Activated CD4-positive, alpha-beta memory T cell treated with anti-CD3 and anti-CD28 coated beads for 36 hours (primary cell): ENCODE measurements at regions of chr5 and their contacts with region 1.

Region 1: DNA sequence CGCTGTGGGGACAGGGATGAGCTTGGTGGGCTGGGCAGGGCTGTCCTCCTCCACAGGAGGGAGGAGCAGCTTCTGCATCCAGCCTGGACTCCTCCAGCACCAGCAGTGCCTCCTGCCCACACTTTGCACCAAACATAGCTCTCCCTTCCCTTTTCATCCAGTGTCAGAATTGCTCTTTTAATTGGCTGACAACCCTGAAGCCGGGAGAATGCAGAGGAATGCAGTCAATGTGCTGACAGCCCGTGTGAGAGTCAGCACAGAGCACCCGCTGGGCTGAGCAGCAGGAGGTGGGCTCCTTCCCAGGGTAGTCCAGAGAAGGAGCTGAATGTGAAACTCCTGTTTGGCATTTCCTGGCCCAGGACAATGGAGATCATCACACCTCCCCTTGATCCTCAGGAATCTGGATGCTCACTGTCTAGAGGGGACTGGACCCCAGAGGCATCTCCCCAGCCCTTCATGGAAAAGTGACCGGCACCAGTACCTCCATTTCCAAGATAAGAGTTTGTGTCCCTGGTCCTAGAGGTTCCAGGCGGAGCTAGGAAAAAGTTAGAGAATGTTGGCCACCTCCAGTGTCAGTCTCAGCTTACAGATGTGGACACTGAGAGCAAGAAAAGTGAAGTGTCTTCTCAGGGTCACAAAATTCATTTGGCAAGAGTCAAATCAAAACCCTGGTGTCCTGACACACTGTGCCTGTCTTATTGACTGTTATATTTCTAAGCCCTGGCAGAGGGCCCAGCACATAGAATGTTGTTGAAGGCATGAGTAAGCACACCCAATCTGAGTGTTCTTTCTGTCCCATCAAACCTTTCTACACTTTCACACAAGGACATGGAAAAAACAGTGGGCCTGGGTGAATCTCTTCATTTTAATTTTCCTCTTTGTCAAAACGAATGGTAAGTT is 202.1 kb downstream of the SNX18 start:
- DNase-seq: peak; percentile 67
- H3K4me3 Mint-ChIP-seq: no peak overlapping the region
- H3K27ac Mint-ChIP-seq: peak overlapping the region; percentile 42
- H3K4me1 Mint-ChIP-seq: peaks cover 34% of the 10 kb centered on the region
- H3K27me3 Mint-ChIP-seq: peaks cover under 1% of the 10 kb centered on the region

Region 2: DNA sequence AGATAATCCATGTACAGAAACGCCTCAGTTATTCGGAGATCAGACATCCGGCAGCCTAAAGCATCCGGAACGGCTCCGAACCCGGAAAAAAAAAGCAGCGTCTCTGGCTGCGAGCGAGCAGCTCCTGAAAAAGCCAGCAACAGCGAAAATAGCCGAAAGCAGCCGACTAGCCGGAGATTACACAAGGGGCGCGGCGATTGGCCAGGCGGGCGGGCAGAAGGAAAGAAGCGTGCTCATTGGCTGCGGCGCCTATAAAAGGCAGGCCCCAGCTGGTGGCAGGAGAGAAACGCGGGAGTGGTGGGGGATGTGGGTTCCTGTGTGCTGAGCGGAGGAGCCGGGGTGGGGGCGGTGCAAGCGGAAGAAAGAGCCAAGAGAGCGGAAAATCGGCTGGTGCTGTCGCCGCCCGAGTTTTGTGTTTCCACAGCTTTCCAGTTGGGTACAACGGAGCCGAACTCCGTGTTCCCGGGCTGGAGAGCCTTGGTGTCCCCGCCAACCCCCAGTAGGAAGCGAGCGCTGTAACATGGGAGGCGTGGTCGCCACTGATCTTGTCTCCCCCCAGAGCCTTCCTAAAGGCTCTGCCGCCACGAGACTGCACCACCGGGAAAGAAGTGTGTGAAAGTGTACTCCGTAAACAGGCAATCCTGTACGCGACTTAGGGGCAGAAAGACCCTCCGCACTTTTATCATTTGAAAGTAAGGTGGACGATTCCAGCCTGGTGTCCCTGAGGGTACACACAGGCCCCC is 409.0 kb before region 1 on chr5 and contains the start of gene ARL15:
- CTCF ChIA-PET with region 1: no interaction called
- POLR2A ChIA-PET with region 1: no interaction called
- intact Hi-C with region 1: loop called (anchors 5 kb)
- DNase-seq: peak; percentile 98
- H3K4me3 Mint-ChIP-seq: peak within 1 kb of the TSS; percentile 86
- H3K27ac Mint-ChIP-seq: peak within 1 kb of the TSS; percentile 89
- H3K4me1 Mint-ChIP-seq: peaks cover 25% of the 10 kb centered on the region
- H3K27me3 Mint-ChIP-seq: peaks cover 3% of the 10 kb centered on the region
- total RNA-seq, gene ARL15: 4.5 to 5.5 TPM

Region 3: GRCh38 chr5:54580997-54581811 is 138.4 kb before region 1 on chr5:
- CTCF ChIA-PET with region 1: no interaction called
- POLR2A ChIA-PET with region 1: no interaction called
- intact Hi-C with region 1: no loop called
- DNase-seq: no peak
- H3K4me3 Mint-ChIP-seq: no peak overlapping the region
- H3K27ac Mint-ChIP-seq: no peak overlapping the region
- H3K4me1 Mint-ChIP-seq: peaks cover 4% of the 10 kb centered on the region
- H3K27me3 Mint-ChIP-seq: no peaks in the 10 kb centered on the region

Region 4: GRCh38 chr5:54646356-54647101 is 73.1 kb before region 1 on chr5:
- CTCF ChIA-PET with region 1: interaction called, 4 read pairs
- POLR2A ChIA-PET with region 1: interaction called, 5 read pairs
- intact Hi-C with region 1: loop called (anchors 1 kb)
- DNase-seq: peak; percentile 85
- H3K4me3 Mint-ChIP-seq: peak overlapping the region; percentile 33
- H3K27ac Mint-ChIP-seq: peak overlapping the region; percentile 80
- H3K4me1 Mint-ChIP-seq: peaks cover 50% of the 10 kb centered on the region
- H3K27me3 Mint-ChIP-seq: no peaks in the 10 kb centered on the region

Region 5: GRCh38 chr5:54753034-54753433 is 33.4 kb after region 1 on chr5:
- CTCF ChIA-PET with region 1: no interaction called
- POLR2A ChIA-PET with region 1: no interaction called
- intact Hi-C with region 1: loop called (anchors 1 kb)
- DNase-seq: peak; percentile 46
- H3K4me3 Mint-ChIP-seq: no peak overlapping the region
- H3K27ac Mint-ChIP-seq: no peak overlapping the region
- H3K4me1 Mint-ChIP-seq: peaks cover 28% of the 10 kb centered on the region
- H3K27me3 Mint-ChIP-seq: no peaks in the 10 kb centered on the region

Region 6: DNA sequence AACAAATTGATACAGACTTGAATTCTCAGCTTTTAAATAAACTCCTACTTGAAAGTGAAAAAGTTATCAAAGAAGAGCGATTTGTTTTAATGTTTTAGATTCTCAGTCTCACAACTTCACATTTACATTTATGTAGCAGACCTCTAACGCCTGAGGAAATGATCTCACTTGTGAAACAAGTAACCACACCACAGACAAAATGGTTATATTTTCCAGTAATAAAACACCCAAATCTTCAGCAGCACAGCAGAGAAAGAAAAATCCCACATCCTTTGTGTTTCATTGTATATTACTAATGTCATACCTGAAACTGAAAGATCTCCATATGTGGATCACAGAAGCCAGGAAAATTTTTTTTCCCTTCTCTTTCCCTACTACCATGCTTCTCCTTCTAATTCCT is 353.0 kb after region 1 on chr5:
- CTCF ChIA-PET with region 1: no interaction called
- POLR2A ChIA-PET with region 1: no interaction called
- intact Hi-C with region 1: loop called (anchors 2 kb)
- DNase-seq: no peak
- H3K4me3 Mint-ChIP-seq: peak overlapping the region; percentile 16
- H3K27ac Mint-ChIP-seq: peak overlapping the region; percentile 75
- H3K4me1 Mint-ChIP-seq: peaks cover 31% of the 10 kb centered on the region
- H3K27me3 Mint-ChIP-seq: no peaks in the 10 kb centered on the region